Naive thymus-derived CD4-positive, alpha-beta T cell (primary cell): ENCODE measurements at regions of chr7 and their contacts with region 1.

Region 1: GRCh38 chr7:1940402-1940786 is 270.3 kb downstream of the ELFN1 start:
- DNase-seq: peak; percentile 78 to 98 (median 96)
- ATAC-seq: peak; percentile 95
- H3K4me3 ChIP-seq: peak overlapping the region; percentile 91
- H3K4me3 Mint-ChIP-seq: peak overlapping the region; percentile 92 to 99 (median 98)
- H3K27ac ChIP-seq: peak overlapping the region; percentile 96
- H3K27ac Mint-ChIP-seq: peak overlapping the region; percentile 87 to 100 (median 99)
- H3K4me1 ChIP-seq: peaks cover 35 to 65% of the 10 kb centered on the region in 2 donors
- H3K4me1 Mint-ChIP-seq: peaks cover 41 to 81% (median 64%) of the 10 kb centered on the region in 7 donors
- H3K27me3 ChIP-seq: no peaks in the 10 kb centered on the region
- H3K27me3 Mint-ChIP-seq: no peaks in the 10 kb centered on the region

Region 2: DNA sequence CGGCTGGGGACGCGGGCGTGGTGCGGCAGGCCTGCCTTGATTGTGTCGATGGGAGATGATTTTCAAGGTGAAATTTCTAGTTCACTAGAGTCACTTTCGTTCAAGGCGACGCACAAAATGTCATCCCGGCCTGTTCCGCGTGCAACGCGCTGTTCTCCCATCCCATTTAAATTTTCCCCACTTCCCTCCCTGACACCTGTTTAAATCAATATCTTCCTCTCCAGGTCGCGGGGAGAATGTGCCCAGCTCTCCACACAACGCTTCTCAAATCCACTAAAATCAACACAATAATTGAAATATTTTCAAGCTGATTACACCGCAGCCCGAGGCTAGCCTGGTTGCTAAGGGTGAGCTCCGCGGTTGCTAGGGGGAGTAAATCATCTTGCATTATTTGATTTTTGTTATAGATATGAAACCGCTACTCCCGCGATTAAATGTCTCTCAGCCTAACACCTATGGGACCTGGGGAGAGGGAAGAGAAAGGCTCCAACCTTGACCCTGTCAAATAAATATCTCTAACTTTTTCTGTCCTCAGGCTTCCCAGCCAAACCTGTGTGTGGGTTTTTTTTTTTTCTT is 671.6 kb before region 1 on chr7:
- CTCF ChIA-PET with region 1: no interaction called
- POLR2A ChIA-PET with region 1: no interaction called
- intact Hi-C with region 1: no loop called
- DNase-seq: no peak
- ATAC-seq: no peak
- H3K4me3 ChIP-seq: no peak overlapping the region
- H3K4me3 Mint-ChIP-seq: no peak overlapping the region
- H3K27ac ChIP-seq: no peak overlapping the region
- H3K27ac Mint-ChIP-seq: no peak overlapping the region
- H3K4me1 ChIP-seq: no peaks in the 10 kb centered on the region
- H3K4me1 Mint-ChIP-seq: no peaks in the 10 kb centered on the region
- H3K27me3 ChIP-seq: peaks cover 0 to 5% of the 10 kb centered on the region in 2 donors
- H3K27me3 Mint-ChIP-seq: peaks cover 4 to 41% (median 31%) of the 10 kb centered on the region in 5 donors

Region 3: GRCh38 chr7:1919539-1920265 is 20.7 kb before region 1 on chr7:
- CTCF ChIA-PET with region 1: interaction called, 4 read pairs
- POLR2A ChIA-PET with region 1: interaction called, 88 read pairs
- intact Hi-C with region 1: loop called (anchors 1 kb)
- DNase-seq: peak in 1 of 9 donors; percentile 46
- ATAC-seq: peak; percentile 21
- H3K4me3 ChIP-seq: peak overlapping the region; percentile 47
- H3K4me3 Mint-ChIP-seq: peak overlapping the region; percentile 79 to 97 (median 87)
- H3K27ac ChIP-seq: peak overlapping the region; percentile 47
- H3K27ac Mint-ChIP-seq: peak overlapping the region; percentile 51 to 97 (median 84)
- H3K4me1 ChIP-seq: peaks cover 21 to 69% of the 10 kb centered on the region in 2 donors
- H3K4me1 Mint-ChIP-seq: peaks cover 48 to 83% (median 59%) of the 10 kb centered on the region in 7 donors
- H3K27me3 ChIP-seq: no peaks in the 10 kb centered on the region
- H3K27me3 Mint-ChIP-seq: peaks cover 0 to 15% (median 0%) of the 10 kb centered on the region in 5 donors

Region 4: GRCh38 chr7:1951159-1951536 is 10.8 kb after region 1 on chr7:
- CTCF ChIA-PET with region 1: no interaction called
- POLR2A ChIA-PET with region 1: interaction called, 16 read pairs
- intact Hi-C with region 1: loop called in 1 of 2 experiments (anchors 1 kb)
- DNase-seq: no peak
- ATAC-seq: peak; percentile 71
- H3K4me3 ChIP-seq: no peak overlapping the region
- H3K4me3 Mint-ChIP-seq: peak overlapping the region in 3 of 10 donors; percentile 35 to 75 (median 50)
- H3K27ac ChIP-seq: no peak overlapping the region
- H3K27ac Mint-ChIP-seq: peak overlapping the region in 8 of 9 donors; percentile 2 to 88 (median 71)
- H3K4me1 ChIP-seq: peaks cover 10% of the 10 kb centered on the region in 2 donors
- H3K4me1 Mint-ChIP-seq: peaks cover 16 to 35% (median 20%) of the 10 kb centered on the region in 7 donors
- H3K27me3 ChIP-seq: no peaks in the 10 kb centered on the region
- H3K27me3 Mint-ChIP-seq: no peaks in the 10 kb centered on the region

Region 5: GRCh38 chr7:1986366-1987083 is 46.1 kb after region 1 on chr7:
- CTCF ChIA-PET with region 1: no interaction called
- POLR2A ChIA-PET with region 1: interaction called, 6 read pairs
- intact Hi-C with region 1: loop called (anchors 2 kb)
- DNase-seq: peak in 7 of 9 donors; percentile 17 to 83 (median 69)
- ATAC-seq: peak; percentile 71
- H3K4me3 ChIP-seq: no peak overlapping the region
- H3K4me3 Mint-ChIP-seq: peak overlapping the region; percentile 26 to 83 (median 71)
- H3K27ac ChIP-seq: peak overlapping the region; percentile 66
- H3K27ac Mint-ChIP-seq: peak overlapping the region; percentile 90 to 99 (median 95)
- H3K4me1 ChIP-seq: peaks cover 25 to 33% of the 10 kb centered on the region in 2 donors
- H3K4me1 Mint-ChIP-seq: peaks cover 13 to 47% (median 38%) of the 10 kb centered on the region in 7 donors
- H3K27me3 ChIP-seq: no peaks in the 10 kb centered on the region
- H3K27me3 Mint-ChIP-seq: no peaks in the 10 kb centered on the region

Region 6: GRCh38 chr7:2069472-2069860 is 129.1 kb after region 1 on chr7:
- CTCF ChIA-PET with region 1: no interaction called
- POLR2A ChIA-PET with region 1: interaction called, 11 read pairs
- intact Hi-C with region 1: no loop called
- DNase-seq: no peak
- ATAC-seq: no peak
- H3K4me3 ChIP-seq: no peak overlapping the region
- H3K4me3 Mint-ChIP-seq: no peak overlapping the region
- H3K27ac ChIP-seq: no peak overlapping the region
- H3K27ac Mint-ChIP-seq: peak overlapping the region in 1 of 9 donors; percentile 72
- H3K4me1 ChIP-seq: peaks cover 6 to 26% of the 10 kb centered on the region in 2 donors
- H3K4me1 Mint-ChIP-seq: peaks cover 7 to 50% (median 33%) of the 10 kb centered on the region in 7 donors
- H3K27me3 ChIP-seq: no peaks in the 10 kb centered on the region
- H3K27me3 Mint-ChIP-seq: no peaks in the 10 kb centered on the region

Region 7: GRCh38 chr7:2241580-2242540 is 301.5 kb after region 1 on chr7 and contains the starts of genes MRM2 and NUDT1:
- CTCF ChIA-PET with region 1: no interaction called
- POLR2A ChIA-PET with region 1: no interaction called
- intact Hi-C with region 1: loop called in 1 of 2 experiments (anchors 10 kb)
- DNase-seq: peak; percentile 36 to 89 (median 53)
- ATAC-seq: peak; percentile 72
- H3K4me3 ChIP-seq: peak within 1 kb of the TSS; percentile 81
- H3K4me3 Mint-ChIP-seq: peak within 1 kb of the TSS; percentile 84 to 98 (median 90)
- H3K27ac ChIP-seq: peak within 1 kb of the TSS; percentile 86
- H3K27ac Mint-ChIP-seq: peak within 1 kb of the TSS; percentile 83 to 98 (median 89)
- H3K4me1 ChIP-seq: peaks cover 0 to 5% of the 10 kb centered on the region in 2 donors
- H3K4me1 Mint-ChIP-seq: peaks cover 6 to 37% (median 19%) of the 10 kb centered on the region in 7 donors
- H3K27me3 ChIP-seq: no peaks in the 10 kb centered on the region
- H3K27me3 Mint-ChIP-seq: no peaks in the 10 kb centered on the region
- total RNA-seq, gene MRM2: 7.1 to 30.7 (median 20.0) TPM
- total RNA-seq, gene NUDT1: 14.0 to 77.7 (median 22.6) TPM

Region 8: DNA sequence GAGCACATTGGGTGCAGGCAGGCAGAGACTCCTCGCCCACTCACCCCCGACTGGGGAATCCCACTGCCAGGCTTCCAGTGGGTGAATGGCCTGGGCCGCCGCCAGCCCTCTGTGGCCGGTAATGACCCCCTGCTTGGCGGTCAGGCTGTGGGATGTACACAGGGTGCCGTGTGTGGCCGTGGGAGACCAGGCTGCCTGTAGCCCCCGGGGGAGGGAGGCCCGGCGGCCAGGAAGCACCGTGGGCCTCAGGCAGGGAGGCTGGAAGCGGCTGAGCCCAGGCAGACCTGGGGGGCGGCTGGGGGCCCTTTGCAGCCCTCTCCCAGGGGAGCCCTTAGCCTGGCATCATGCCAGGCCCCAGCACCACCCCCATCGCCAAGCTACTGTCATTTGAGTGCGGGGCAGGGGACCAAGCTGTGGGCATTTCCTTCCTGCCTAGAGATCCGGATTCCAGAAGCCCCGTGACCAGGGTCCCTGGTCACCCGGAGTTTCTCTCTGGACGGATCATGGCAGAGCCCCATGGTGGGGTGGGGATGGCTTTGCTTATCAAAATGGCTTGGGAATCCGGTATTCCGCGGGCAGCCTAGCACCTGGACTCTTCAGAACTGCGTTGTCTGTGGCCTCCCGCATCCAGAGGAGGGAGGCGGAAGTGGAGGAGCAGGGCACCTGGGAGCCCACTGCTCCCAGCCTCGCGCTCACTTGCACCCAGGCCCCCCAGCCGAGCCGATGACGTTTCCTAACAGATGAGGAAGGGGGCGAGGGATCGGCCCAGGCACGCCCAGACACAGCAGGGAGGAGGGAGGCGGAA is 692.5 kb after region 1 on chr7:
- CTCF ChIA-PET with region 1: no interaction called
- POLR2A ChIA-PET with region 1: no interaction called
- intact Hi-C with region 1: no loop called
- DNase-seq: peak in 8 of 9 donors; percentile 24 to 73 (median 37)
- ATAC-seq: no peak
- H3K4me3 ChIP-seq: peak overlapping the region; percentile 58
- H3K4me3 Mint-ChIP-seq: peak overlapping the region; percentile 86 to 96 (median 89)
- H3K27ac ChIP-seq: peak overlapping the region; percentile 79
- H3K27ac Mint-ChIP-seq: peak overlapping the region in 8 of 9 donors; percentile 72 to 88 (median 81)
- H3K4me1 ChIP-seq: peaks cover 3 to 16% of the 10 kb centered on the region in 2 donors
- H3K4me1 Mint-ChIP-seq: peaks cover 0 to 19% (median 15%) of the 10 kb centered on the region in 7 donors
- H3K27me3 ChIP-seq: no peaks in the 10 kb centered on the region
- H3K27me3 Mint-ChIP-seq: peaks cover 0 to 4% (median 0%) of the 10 kb centered on the region in 5 donors